PC-3 (cell line): ENCODE measurements at regions of chr19 and their contacts with region 1.

Region 1: GRCh38 chr19:47273313-47273977 is 1.2 kb upstream of the INAFM1 start:
- DNase-seq: peak; percentile 79
- ATAC-seq: peak; percentile 82
- H3K4me3 ChIP-seq: peak overlapping the region; percentile 73
- H3K27ac ChIP-seq: peak overlapping the region; percentile 88
- H3K4me1 ChIP-seq: peaks cover 9% of the 10 kb centered on the region; the same call in 1 of the 2 replicates
- H3K27me3 ChIP-seq: no peaks in the 10 kb centered on the region
- CTCF ChIP-seq: no peak

Region 2: DNA sequence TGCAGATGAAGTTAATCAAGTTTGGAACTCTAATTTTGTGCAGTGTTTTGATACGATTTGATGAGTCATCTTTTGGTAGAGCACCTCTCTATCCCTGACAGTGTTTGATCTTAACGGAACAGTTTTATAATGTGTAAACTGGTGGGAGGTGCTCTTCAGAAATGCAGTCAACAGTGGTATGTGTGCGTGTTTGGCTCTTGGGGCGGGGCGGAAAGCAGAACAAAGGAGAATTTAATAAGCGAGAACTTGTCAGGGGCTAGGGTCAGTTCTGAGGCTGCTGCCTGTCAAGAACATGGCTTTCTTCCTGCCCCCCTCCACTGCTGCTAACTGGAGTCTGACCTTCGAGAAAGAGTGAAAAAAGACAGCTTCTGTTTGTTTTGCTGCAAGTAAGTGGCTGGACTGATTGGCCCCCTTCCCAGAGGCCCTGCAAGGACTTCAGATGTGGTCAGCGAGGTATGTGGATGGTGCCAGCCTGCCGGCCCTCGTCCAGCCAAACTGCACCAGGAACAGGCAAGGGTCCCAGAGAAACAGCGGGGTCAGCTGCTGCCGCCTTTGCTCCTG is 83.2 kb before region 1 on chr19:
- CTCF ChIA-PET with region 1: no interaction called
- POLR2A ChIA-PET with region 1: interaction called, 10 read pairs
- intact Hi-C with region 1: no loop called
- DNase-seq: peak; percentile 49
- ATAC-seq: peak; percentile 80
- H3K4me3 ChIP-seq: no peak overlapping the region
- H3K27ac ChIP-seq: peak overlapping the region; percentile 65
- H3K4me1 ChIP-seq: peaks cover 18% of the 10 kb centered on the region
- H3K27me3 ChIP-seq: no peaks in the 10 kb centered on the region
- CTCF ChIP-seq: no peak

Region 3: GRCh38 chr19:47256688-47257443 is 16.6 kb before region 1 on chr19:
- CTCF ChIA-PET with region 1: no interaction called
- POLR2A ChIA-PET with region 1: interaction called, 15 read pairs
- intact Hi-C with region 1: loop called (anchors 1 kb)
- DNase-seq: peak; percentile 94
- ATAC-seq: peak; percentile 76
- H3K4me3 ChIP-seq: peak overlapping the region; percentile 77; the same call in 1 of the 2 replicates
- H3K27ac ChIP-seq: peak overlapping the region; percentile 64
- H3K4me1 ChIP-seq: peaks cover 24% of the 10 kb centered on the region
- H3K27me3 ChIP-seq: no peaks in the 10 kb centered on the region
- CTCF ChIP-seq: no peak

Region 4: GRCh38 chr19:47316513-47316912 is 43.1 kb after region 1 on chr19:
- CTCF ChIA-PET with region 1: no interaction called
- POLR2A ChIA-PET with region 1: interaction called, 37 read pairs
- intact Hi-C with region 1: no loop called
- DNase-seq: no peak
- ATAC-seq: no peak
- H3K4me3 ChIP-seq: no peak overlapping the region
- H3K27ac ChIP-seq: no peak overlapping the region
- H3K4me1 ChIP-seq: peaks cover 3% of the 10 kb centered on the region; the same call in 1 of the 2 replicates
- H3K27me3 ChIP-seq: no peaks in the 10 kb centered on the region
- CTCF ChIP-seq: no peak